HCT116 (cell line): ENCODE measurements at regions of chr2 and their contacts with region 1.

Region 1: GRCh38 chr2:127479219-127479825 is 47.0 kb downstream of the IWS1 start:
- DNase-seq: peak; percentile 34
- ATAC-seq: peak; percentile 86
- H3K4me3 ChIP-seq: no peak overlapping the region
- H3K27ac ChIP-seq: no peak overlapping the region
- H3K4me1 ChIP-seq: no peaks in the 10 kb centered on the region
- H3K27me3 ChIP-seq: no peaks in the 10 kb centered on the region
- CTCF ChIP-seq: peak; percentile 67 to 86 (median 72)
- POLR2A ChIP-seq: no peak
- RAD21 ChIP-seq: peak; percentile 81

Region 2: GRCh38 chr2:127014630-127015029 is 464.7 kb before region 1 on chr2:
- CTCF ChIA-PET with region 1: no interaction called
- POLR2A ChIA-PET with region 1: no interaction called
- RAD21 ChIA-PET with region 1: no interaction called
- intact Hi-C with region 1: no loop called
- DNase-seq: no peak
- ATAC-seq: no peak
- H3K4me3 ChIP-seq: no peak overlapping the region
- H3K27ac ChIP-seq: no peak overlapping the region
- H3K4me1 ChIP-seq: no peaks in the 10 kb centered on the region
- H3K27me3 ChIP-seq: peaks cover 15% of the 10 kb centered on the region; the same call in 1 of the 2 replicates
- CTCF ChIP-seq: no peak
- POLR2A ChIP-seq: no peak
- RAD21 ChIP-seq: no peak

Region 3: DNA sequence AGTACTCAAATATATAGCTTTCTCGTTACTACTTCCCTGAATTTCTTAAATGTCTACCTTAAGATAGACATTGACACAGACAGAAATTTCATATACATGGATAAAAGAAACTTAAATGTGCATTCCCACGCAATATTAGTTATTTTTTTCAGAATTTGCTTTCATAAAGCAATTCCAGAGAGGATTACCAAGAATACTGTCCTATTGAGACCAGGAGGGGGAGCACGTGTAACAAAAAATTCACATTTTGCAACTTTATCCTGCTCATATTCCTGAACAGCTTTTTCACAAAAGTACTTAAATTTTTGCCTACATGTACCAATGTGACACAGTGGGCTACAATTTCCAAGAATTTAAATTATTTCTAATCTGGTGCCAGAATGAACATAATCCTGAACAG is 154.7 kb before region 1 on chr2:
- CTCF ChIA-PET with region 1: interaction called, 11 read pairs
- POLR2A ChIA-PET with region 1: no interaction called
- RAD21 ChIA-PET with region 1: interaction called in 1 of 2 experiments, 3 read pairs
- intact Hi-C with region 1: loop called (anchors 1 kb)
- DNase-seq: no peak
- ATAC-seq: peak; percentile 64
- H3K4me3 ChIP-seq: no peak overlapping the region
- H3K27ac ChIP-seq: no peak overlapping the region
- H3K4me1 ChIP-seq: no peaks in the 10 kb centered on the region
- H3K27me3 ChIP-seq: no peaks in the 10 kb centered on the region
- CTCF ChIP-seq: peak; percentile 53 to 70 (median 58); a peak in 5 of 6 replicates
- POLR2A ChIP-seq: no peak
- RAD21 ChIP-seq: peak; percentile 65

Region 4: DNA sequence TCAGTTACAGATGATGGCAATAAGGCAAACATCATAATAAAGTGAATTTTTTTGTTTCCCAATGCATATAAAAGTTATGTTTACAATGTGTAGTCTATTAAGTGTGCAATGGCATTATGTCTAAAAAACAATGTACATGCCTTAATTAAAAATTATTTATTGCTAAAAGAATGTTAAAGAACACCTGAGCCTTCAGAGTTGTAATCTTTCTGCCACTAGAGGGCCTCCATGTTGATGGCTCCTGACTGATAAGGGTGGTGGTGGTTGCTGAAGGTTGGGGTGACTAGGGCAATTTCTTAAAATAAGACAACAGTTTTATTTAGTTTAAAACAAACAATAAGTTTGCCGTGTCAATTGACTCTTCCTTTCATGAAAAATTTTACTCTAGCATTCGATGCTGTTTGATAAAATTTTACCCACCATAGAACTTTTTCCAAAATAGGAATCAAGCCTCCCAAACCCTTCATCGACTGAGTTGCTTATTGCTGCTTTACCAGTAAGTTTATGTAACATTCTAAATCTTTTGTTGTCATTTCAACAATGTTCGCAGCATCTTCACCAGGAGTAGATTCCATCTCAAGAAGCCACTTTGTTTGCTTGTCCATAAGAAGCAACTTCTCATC is 123.8 kb before region 1 on chr2:
- CTCF ChIA-PET with region 1: no interaction called
- POLR2A ChIA-PET with region 1: no interaction called
- RAD21 ChIA-PET with region 1: no interaction called
- intact Hi-C with region 1: loop called (anchors 1 kb)
- DNase-seq: peak; percentile 27
- ATAC-seq: peak; percentile 79
- H3K4me3 ChIP-seq: no peak overlapping the region
- H3K27ac ChIP-seq: no peak overlapping the region
- H3K4me1 ChIP-seq: no peaks in the 10 kb centered on the region
- H3K27me3 ChIP-seq: no peaks in the 10 kb centered on the region
- CTCF ChIP-seq: peak; percentile 39 to 83 (median 74); a peak in 5 of 6 replicates
- POLR2A ChIP-seq: no peak
- RAD21 ChIP-seq: peak; percentile 51

Region 5: GRCh38 chr2:127371037-127371436 is 108.3 kb before region 1 on chr2:
- CTCF ChIA-PET with region 1: interaction called, 7 read pairs
- POLR2A ChIA-PET with region 1: no interaction called
- RAD21 ChIA-PET with region 1: no interaction called
- intact Hi-C with region 1: loop called (anchors 5 kb)
- DNase-seq: peak; percentile 60
- ATAC-seq: peak; percentile 99
- H3K4me3 ChIP-seq: no peak overlapping the region
- H3K27ac ChIP-seq: no peak overlapping the region
- H3K4me1 ChIP-seq: peaks cover 6 to 9% of the 10 kb centered on the region in 2 experiments; a peak in 3 of 4 replicates
- H3K27me3 ChIP-seq: no peaks in the 10 kb centered on the region
- CTCF ChIP-seq: peak; percentile 52 to 61 (median 56); a peak in 5 of 6 replicates
- POLR2A ChIP-seq: no peak
- RAD21 ChIP-seq: peak; percentile 56

Region 6: DNA sequence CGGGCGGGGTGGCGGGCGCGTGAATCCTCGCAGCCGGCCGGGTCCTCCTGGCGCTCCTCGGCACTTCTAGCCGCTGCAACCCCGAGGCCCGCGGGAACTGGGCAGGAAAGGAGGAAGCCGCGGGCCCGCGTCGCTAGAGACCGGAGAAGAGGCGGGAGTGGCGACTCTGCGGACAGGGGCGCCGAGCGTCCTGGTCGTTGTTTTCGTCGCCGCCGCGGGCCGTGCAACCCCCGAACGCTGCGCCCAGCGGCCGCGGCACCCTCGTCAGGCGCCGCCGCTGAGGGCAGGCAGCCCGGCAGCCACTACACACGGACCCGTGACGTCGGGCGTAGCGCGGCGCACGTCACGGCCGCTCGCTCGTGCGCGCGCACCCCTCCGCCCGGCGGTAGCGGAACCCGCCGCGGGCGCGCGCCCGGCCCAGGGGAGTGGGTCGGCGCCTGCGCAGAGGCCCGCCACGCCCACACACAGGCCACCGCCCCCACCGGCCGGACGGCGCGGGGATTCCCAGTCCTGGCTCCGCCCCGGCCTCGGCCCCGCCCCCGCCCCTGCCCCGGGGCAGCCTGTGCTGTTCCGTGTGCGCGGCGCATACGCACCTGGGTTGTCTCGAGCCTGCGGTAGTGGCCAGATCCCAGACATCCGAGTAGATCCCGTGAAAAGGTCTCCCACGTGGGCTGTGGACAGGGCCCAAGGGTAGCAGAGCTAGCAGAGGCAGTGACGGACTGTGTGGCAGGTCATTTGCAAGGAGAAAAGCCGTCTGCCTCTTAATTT is 91.5 kb before region 1 on chr2 and contains the start of gene MAP3K2:
- CTCF ChIA-PET with region 1: no interaction called
- POLR2A ChIA-PET with region 1: no interaction called
- RAD21 ChIA-PET with region 1: no interaction called
- intact Hi-C with region 1: no loop called
- DNase-seq: peak; percentile 72
- ATAC-seq: peak; percentile 87
- H3K4me3 ChIP-seq: peak within 1 kb of the TSS; percentile 55 to 64
- H3K27ac ChIP-seq: peak within 1 kb of the TSS; percentile 97
- H3K4me1 ChIP-seq: peaks cover 14 to 22% of the 10 kb centered on the region in 2 experiments
- H3K27me3 ChIP-seq: no peaks in the 10 kb centered on the region
- CTCF ChIP-seq: no peak
- POLR2A ChIP-seq: peak; percentile 49
- RAD21 ChIP-seq: no peak
- total RNA-seq, gene MAP3K2: 44.5 TPM